ENCODE measurements at regions of chr12 and their contacts with region 1.

Region 1: DNA sequence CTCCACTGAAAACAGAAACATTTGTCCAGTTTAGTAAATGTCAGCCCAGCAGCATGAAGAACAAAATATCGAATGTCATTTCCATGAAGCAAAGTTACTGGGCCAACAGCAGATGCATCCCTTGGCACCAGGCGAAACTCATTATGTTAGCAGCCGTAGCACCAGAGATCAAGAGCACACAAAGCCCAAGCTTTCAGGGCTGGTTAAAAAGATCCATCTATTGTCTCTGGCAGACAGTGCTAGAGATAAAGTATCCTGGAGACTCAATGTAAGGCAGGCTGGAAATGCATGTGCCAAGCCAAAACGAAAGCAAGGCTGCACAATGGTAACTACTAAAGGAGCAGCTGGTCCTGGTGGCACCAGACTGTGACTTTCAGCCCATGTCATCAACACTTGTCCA is 120.3 kb upstream of the PLEKHG7 start:
- DNase-seq: no peak
- H3K4me3 ChIP-seq: no peak overlapping the region
- CTCF ChIP-seq: no peak

Region 2: GRCh38 chr12:92469837-92470236 is 112.6 kb before region 1 on chr12:
- in situ Hi-C with region 1: no loop called
- DNase-seq: no peak
- H3K4me3 ChIP-seq: no peak overlapping the region
- CTCF ChIP-seq: no peak

Region 3: DNA sequence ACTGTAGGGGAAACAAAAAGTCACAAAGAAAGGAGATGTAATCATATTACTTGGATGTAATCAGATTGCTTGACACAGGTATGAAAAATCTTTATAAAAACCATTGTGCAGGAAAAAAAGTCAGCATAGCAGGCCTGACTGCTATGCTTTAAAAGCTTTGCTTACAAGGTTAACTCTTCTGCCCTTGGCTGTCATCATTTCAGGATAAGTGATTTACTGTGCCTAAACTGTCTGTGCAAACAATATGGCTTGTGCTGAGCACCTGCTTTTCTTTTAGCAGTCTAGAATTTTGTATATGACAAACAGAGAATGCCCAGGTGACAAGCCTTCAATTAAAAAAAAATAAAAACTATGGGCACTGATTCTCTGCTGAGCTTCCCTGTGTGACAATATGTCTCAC is 56.5 kb after region 1 on chr12:
- in situ Hi-C with region 1: loop called (anchors 5 kb)
- DNase-seq: no peak
- H3K4me3 ChIP-seq: no peak overlapping the region
- CTCF ChIP-seq: no peak